ENCODE measurements at regions of chr11 and their contacts with region 1.

Region 1: DNA sequence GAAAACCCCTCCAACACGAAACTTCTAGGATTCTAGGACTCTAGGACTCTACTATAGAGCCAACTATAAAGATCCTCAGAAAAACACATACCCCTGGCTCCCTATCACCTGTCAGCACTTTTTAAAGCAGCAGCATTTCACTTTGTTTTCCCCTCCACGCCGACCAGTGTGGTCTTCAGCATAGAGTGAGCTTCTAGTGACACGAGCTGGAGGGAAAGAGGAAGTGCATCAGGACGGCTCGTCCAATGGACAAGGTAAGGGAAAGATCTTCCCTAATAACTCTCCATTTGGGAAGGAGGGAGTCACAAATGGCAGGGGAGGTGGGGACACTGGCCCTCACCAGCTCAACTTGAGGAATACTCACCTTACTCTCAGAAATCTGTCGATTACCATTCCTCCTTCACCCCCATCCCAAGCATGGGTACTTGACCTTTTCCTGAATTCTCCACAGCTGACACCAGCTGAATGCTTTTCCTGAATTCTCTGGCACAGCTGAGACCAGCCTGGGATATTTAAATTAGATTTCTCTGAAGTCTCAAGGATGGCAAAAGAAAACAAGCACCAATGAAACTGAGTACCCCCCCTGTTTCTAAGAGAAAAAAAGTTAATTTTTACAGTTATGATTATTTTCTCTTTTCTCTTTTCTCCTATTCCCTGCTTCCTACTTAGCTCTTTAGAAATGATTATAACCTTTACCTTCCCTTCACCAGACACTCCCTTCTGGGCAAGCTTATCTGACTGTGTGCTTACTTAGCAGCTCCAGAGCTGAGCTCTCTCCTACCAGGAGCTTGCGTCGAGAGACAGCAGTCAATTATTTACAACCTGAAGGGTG is 33.3 kb upstream of the NNMT start:
- H3K4me3 ChIP-seq: no peak overlapping the region
- H3K27ac ChIP-seq: no peak overlapping the region
- H3K4me1 ChIP-seq: no peaks in the 10 kb centered on the region
- CTCF ChIP-seq: peak; percentile 73

Region 2: DNA sequence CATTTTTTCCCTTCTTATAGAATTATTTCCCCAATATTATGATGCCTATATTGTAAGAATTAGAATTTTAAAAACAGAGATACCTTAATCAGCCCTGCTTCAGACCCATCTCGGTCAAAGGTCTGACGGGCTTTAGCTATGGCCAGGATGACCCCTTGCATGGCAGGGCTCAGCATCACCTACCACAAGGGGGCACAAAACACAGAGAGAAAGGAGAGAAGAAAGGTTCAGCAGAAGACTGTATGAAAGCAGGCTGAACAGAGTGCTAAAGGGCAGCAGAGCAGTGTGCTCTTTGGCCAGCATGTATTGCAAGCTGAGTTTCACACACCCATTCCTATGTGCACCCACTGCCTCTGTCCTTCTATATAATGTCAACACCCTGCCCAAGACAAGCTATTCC is 456.5 kb before region 1 on chr11:
- CTCF ChIA-PET with region 1: interaction called, 72 read pairs
- POLR2A ChIA-PET with region 1: no interaction called
- H3K4me3 ChIP-seq: no peak overlapping the region
- H3K27ac ChIP-seq: no peak overlapping the region
- H3K4me1 ChIP-seq: no peaks in the 10 kb centered on the region
- CTCF ChIP-seq: no peak

Region 3: DNA sequence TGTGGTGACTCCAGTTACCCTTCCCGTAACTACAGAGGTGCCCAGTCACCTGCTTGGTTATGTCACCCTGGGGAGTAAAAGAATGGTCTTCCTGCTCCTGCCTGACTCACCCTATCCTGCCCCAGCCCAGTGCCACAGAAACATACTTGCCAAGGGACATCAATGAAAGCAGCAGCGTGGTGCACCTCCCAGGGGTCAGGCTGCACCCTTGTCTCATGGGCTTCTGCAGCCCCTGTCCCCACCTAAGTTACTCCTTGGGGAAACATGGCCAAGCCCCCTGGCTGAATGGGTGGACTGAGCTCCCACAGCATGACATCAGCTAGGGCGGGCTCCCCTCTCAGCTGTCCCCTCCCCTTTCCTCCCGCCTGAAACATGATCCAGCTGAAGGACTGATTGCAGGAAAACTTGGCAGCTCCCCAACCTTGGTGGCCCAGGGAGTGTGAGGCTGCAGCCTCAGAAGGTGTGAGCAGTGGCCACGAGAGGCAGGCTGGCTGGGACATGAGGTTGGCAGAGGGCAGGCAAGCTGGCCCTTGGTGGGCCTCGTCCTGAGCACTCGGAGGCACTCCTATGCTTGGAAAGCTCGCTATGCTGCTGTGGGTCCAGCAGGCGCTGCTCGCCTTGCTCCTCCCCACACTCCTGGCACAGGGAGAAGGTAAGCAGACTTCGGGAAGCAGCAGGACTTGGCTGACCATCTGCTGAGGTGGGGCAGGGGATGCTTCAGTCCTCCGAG is 288.0 kb before region 1 on chr11 and contains the start of gene HTR3A:
- CTCF ChIA-PET with region 1: interaction called, 10 read pairs
- POLR2A ChIA-PET with region 1: no interaction called
- H3K4me3 ChIP-seq: no peak within 1 kb of the TSS
- H3K27ac ChIP-seq: no peak within 1 kb of the TSS
- H3K4me1 ChIP-seq: no peaks in the 10 kb centered on the region; the same call in 1 of the 2 replicates
- CTCF ChIP-seq: peak; percentile 68

Region 4: DNA sequence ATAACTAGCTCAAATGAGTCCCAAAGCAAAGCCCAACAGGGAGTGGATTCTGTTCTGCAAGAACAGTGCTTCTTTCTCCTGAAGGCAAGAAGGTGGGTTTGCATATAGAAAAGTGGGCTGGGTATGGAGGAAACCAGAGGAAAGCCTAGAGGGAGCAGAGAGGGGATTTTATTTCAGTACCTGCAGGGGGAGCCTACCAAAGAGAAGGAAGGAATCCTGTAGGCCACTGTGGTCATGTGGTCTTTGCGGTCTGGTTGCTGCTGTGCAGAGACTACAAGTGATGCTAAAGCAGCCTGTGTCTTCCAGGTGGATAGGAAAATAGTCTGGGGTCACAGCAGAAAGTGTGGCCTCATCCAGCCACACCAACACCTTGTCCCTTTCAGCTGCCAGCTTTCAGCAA is 236.5 kb before region 1 on chr11:
- CTCF ChIA-PET with region 1: interaction called, 68 read pairs
- POLR2A ChIA-PET with region 1: no interaction called
- H3K4me3 ChIP-seq: no peak overlapping the region
- H3K27ac ChIP-seq: no peak overlapping the region
- H3K4me1 ChIP-seq: no peaks in the 10 kb centered on the region
- CTCF ChIP-seq: no peak

Region 5: DNA sequence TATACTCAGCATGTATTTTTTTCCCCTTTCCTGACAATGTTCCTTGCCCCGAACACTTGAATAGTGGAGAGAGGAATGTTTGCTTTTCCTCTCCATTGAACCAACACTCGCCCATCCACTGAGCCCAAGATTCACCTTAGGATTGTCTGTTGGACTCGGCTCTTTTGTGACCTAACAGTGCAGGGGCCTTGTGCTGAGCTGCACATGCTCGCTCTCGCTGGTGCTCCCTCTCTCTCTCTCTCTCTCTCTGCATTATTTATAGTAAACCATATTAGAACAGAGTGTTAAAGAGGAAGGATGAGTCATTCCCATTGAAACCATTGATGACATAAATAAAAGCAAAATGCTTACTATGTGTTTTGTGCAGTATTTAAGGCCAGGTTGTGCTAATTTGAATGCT is 182.7 kb before region 1 on chr11:
- CTCF ChIA-PET with region 1: interaction called, 16 read pairs
- POLR2A ChIA-PET with region 1: no interaction called
- H3K4me3 ChIP-seq: no peak overlapping the region
- H3K27ac ChIP-seq: peak overlapping the region; percentile 20; the same call in 1 of the 2 replicates
- H3K4me1 ChIP-seq: peaks cover 37% of the 10 kb centered on the region
- CTCF ChIP-seq: no peak

Region 6: DNA sequence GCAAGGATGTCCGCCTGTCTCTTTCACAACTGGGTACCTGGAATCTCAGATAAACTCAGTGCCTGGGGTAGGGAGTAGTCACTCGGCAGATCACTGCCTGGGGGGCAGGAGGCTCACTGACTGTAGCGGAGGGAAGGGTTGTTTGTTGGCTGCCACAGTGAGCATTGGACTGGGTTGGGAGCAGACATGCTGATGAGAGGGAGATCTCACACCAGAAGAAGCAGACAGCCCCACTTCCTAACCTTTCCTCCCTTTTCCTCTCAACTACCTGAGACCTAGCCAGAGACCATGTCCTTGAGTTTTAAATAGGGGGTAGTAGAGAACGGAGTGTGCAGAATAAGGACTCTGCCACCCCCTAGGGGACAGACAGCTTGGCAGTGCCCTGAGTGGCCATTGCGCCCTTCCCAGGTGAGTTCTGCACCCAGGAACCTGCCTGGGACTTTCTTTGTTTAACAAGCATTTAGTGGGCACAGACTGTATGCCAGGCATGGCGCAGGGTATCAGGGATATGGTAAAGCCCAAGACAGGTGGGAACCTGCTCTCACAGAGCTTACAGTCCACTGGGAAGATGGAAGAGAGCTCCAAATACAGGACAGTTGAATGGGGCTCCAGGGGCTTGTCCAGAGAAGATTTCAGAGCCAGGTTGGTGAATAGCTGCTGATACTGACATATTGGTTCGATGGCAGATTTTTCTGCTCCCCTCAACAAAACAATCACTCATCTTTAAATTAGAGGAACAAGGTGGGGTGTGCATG is 82.4 kb before region 1 on chr11:
- CTCF ChIA-PET with region 1: interaction called, 17 read pairs
- POLR2A ChIA-PET with region 1: no interaction called
- H3K4me3 ChIP-seq: no peak overlapping the region
- H3K27ac ChIP-seq: no peak overlapping the region
- H3K4me1 ChIP-seq: no peaks in the 10 kb centered on the region; the same call in 1 of the 2 replicates
- CTCF ChIP-seq: peak; percentile 72

Region 7: DNA sequence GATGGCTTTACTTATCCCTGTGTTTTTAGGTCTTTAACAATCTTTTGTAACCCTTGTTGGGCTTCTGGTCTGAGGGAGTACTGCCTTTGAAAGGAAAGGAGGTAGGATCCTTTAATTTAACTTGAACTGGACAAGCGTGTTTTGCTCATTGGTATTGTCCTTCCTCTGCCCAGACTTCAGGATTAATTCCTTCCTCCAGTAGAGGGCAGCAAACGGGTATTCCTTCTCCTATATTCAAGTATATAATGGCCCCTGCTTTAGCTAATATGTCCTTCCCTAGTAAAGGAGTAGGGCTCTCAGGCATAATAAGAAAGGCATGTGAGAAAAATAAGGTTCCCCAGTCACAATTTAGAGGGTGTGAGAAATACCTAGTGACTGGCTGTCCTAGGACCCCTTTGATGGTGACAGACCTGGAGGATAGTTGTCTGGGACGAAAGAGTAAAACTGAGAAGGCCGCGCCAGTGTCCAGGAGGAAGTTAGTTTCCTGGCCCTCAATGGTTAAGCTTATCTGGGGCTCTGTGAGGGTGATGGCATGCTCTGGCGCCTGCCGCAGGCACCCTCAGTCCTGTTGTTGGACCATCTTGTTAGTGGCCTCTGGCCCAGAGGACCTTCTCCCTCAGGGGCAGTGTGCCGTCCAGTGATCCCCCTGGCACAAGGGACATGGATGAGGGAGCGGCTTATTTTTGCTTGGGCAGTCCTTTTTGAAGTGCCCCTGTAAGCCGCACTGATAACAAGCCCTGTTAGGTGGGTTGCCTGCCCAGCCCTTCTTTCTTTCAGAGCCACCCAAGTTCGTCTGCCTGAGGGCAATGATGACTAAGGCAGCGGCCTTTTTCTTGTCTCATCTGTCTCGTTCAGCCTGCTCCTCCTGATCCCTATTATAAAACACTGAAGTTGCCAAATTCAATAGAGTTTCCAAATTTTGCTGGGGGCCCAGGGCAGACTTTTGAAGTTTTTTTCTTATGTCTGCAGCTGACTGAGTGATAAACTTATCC is 85.6 kb after region 1 on chr11:
- CTCF ChIA-PET with region 1: no interaction called
- POLR2A ChIA-PET with region 1: no interaction called
- H3K4me3 ChIP-seq: no peak overlapping the region
- H3K27ac ChIP-seq: no peak overlapping the region
- H3K4me1 ChIP-seq: no peaks in the 10 kb centered on the region
- CTCF ChIP-seq: no peak

Measured in HEK293 (cell line).